Activated T-helper 1 cell treated with anti-CD3 and anti-CD28 coated beads, Interleukin-12 subunit alpha, Interleukin-12 subunit beta, Interleukin-2, Interleukin-4 antibody, amounts not matched to agents 30 ng/mL and 10 ng/mL and 1 ng/mL, durations not matched to agents 14 hours and 24 hours and 36 hours (primary cell): ENCODE measurements at regions of chr18 and their contacts with region 1.

Region 1: DNA sequence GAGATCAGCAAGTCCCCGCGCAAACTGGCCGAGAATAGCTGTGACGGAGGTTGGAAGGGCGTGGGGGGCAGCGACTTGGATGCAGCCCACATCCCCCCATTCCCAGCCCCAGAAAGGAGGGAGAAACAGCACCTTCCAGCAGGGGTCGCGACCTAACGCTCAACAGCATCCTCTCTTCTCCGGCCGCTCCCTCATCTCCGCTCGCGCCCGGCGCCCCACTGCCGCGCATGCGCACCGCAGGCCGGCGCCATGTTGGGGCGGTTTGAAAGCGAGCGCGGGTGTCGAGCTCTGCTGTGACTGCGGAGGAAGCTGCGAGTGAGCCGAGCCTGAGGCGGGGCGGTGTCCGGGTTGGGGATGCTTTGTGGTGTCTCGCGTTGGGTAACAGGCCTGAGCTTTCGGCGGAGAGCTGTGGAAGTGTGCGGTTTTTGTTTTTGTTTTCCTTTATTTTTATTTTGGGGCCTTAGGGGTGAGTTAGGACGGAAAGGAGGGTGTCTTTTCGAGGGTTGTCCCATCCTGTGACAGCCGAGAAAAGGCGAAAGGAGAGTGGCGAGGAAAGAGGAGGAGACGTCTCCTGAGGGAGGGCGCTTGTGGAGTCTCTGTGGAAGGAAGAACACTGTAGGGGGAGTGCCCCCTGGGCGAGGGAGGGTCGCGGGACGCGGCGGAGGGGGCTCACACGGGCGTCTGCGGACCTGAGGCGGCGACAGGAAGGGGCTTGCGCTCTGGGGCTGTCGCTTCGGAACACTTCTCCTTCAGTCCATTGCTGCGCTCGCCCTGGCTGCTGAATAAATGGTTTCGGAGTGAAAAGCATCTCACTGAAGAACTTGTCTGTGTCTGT is at the starts of genes C18orf54 and STARD6:
- DNase-seq: peak; percentile 93
- H3K4me3 Mint-ChIP-seq: peak within 1 kb of the TSS; percentile 98
- H3K27ac Mint-ChIP-seq: peak within 1 kb of the TSS; percentile 97
- H3K4me1 Mint-ChIP-seq: peaks cover 34% of the 10 kb centered on the region
- H3K27me3 Mint-ChIP-seq: no peaks in the 10 kb centered on the region
- total RNA-seq, gene C18orf54: 10.4 and 10.7 TPM in 2 replicates
- total RNA-seq, gene STARD6: 0.54 and 0.65 TPM in 2 replicates

Region 2: DNA sequence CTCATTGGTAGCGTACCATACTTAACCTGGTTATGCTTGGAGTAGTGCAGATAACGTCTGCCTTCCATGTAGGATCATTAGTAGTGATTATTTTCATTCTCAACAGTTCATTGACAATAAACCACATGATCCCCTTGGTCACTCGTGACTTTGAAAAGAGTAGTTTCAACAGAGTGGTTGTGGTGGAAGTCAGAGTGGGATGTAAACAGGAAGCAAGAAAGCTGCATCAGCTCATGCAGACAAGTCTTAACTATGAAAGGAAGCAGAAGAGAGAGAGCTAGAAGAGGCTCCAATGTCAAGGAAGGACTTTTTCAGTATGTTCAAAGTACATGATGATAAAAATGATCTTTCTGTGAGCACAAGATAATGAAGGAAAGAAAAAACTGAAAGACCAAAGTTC is 420.8 kb before region 1 on chr18:
- intact Hi-C with region 1: loop called (anchors 10 kb)
- DNase-seq: no peak
- H3K4me3 Mint-ChIP-seq: no peak overlapping the region
- H3K27ac Mint-ChIP-seq: peak overlapping the region; percentile 45
- H3K4me1 Mint-ChIP-seq: peaks cover 25% of the 10 kb centered on the region
- H3K27me3 Mint-ChIP-seq: no peaks in the 10 kb centered on the region

Region 3: DNA sequence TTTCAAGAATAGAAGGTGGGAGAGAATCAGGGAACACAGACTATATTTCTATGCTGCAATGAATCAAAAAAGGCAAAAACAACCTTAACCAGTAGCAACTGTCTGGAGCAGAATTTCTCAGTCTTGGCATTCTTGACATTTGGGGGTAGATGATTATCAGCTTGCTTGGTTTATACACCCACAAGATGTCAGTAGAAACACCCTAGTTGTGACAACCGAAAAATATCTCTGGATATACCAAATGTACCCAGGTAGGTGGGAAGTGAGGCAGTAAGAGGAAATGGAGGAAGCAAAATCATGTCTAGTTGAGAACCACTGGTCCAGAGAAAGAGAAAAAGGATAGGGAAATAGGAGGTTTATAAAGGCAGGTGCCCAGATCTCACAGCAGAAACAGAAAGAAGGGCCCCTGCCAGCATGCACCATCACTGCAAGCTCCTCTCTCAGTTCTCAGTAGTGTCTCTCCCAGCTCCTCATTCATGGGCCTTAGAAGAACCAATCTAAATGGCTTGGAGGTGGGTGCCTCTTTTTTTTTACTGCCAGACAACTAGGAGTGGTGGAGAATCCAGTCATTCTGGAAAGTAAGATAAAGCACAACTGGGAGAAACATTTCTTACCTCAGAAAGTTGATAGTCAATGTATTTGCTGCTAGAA is 183.8 kb before region 1 on chr18:
- intact Hi-C with region 1: loop called (anchors 1 kb)
- DNase-seq: no peak
- H3K4me3 Mint-ChIP-seq: peak overlapping the region; percentile 49
- H3K27ac Mint-ChIP-seq: peak overlapping the region; percentile 96
- H3K4me1 Mint-ChIP-seq: peaks cover 69% of the 10 kb centered on the region
- H3K27me3 Mint-ChIP-seq: no peaks in the 10 kb centered on the region

Region 4: DNA sequence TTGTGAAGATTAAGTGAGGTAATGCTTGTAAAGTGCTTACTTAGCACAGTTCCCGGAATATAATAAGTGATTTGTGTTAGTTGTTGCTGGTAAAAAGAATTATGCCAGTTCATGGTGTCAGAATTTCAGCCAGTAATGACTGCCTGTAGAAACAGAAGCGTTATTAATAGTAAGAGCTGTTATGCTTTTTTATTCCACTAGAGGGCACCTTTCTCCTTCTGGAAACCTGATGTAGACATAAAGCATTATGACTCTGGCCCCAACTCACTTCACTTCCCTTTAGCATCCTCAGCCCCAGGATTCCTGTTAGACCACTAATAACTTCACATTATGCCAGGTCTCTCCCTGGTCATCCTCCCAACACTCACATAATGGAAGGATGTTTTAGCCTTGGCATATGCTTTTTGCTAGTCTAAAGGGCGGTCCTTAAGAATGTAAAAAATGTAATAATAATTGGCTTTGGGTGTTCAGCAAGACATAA is 34.7 kb after region 1 on chr18:
- intact Hi-C with region 1: loop called (anchors 1 kb)
- DNase-seq: no peak
- H3K4me3 Mint-ChIP-seq: no peak overlapping the region
- H3K27ac Mint-ChIP-seq: no peak overlapping the region
- H3K4me1 Mint-ChIP-seq: peaks cover 43% of the 10 kb centered on the region
- H3K27me3 Mint-ChIP-seq: peaks cover 3% of the 10 kb centered on the region